ENCODE measurements at regions of chr3 and their contacts with region 1.

Region 1: DNA sequence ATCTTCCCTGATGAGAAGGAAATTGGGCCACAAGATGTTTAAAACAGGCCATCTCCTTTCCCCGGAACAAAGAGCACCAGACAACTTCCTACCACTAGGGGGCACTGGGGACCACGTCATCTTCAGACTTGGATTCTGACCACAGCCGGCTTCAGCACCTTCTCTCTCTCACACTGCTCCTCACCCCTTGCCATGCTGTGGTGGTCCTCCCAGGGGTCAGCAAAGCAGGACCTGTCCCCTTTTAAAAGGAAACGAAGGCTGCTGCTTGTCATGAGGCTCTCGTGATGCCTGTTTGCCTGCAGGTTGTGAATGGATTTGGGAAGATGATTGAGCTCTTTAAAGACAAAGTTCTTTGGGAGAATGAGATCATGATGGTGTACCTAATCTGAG is 16.2 kb downstream of the RFT1 start:
- DNase-seq: peak; percentile 89
- H3K4me3 Mint-ChIP-seq: no peak overlapping the region
- H3K27ac Mint-ChIP-seq: no peak overlapping the region
- H3K4me1 Mint-ChIP-seq: peaks cover 25% of the 10 kb centered on the region
- H3K27me3 Mint-ChIP-seq: no peaks in the 10 kb centered on the region

Region 2: GRCh38 chr3:53065841-53066480 is 48.0 kb before region 1 on chr3:
- CTCF ChIA-PET with region 1: no interaction called
- POLR2A ChIA-PET with region 1: no interaction called
- DNase-seq: no peak
- H3K4me3 Mint-ChIP-seq: no peak overlapping the region
- H3K27ac Mint-ChIP-seq: no peak overlapping the region
- H3K4me1 Mint-ChIP-seq: no peaks in the 10 kb centered on the region
- H3K27me3 Mint-ChIP-seq: peaks cover 23% of the 10 kb centered on the region

Region 3: GRCh38 chr3:53129344-53129743 is 15.3 kb after region 1 on chr3:
- CTCF ChIA-PET with region 1: interaction called, 25 read pairs
- POLR2A ChIA-PET with region 1: no interaction called
- DNase-seq: no peak
- H3K4me3 Mint-ChIP-seq: peak overlapping the region; percentile 85
- H3K27ac Mint-ChIP-seq: peak overlapping the region; percentile 95
- H3K4me1 Mint-ChIP-seq: peaks cover 29% of the 10 kb centered on the region
- H3K27me3 Mint-ChIP-seq: no peaks in the 10 kb centered on the region

Region 4: DNA sequence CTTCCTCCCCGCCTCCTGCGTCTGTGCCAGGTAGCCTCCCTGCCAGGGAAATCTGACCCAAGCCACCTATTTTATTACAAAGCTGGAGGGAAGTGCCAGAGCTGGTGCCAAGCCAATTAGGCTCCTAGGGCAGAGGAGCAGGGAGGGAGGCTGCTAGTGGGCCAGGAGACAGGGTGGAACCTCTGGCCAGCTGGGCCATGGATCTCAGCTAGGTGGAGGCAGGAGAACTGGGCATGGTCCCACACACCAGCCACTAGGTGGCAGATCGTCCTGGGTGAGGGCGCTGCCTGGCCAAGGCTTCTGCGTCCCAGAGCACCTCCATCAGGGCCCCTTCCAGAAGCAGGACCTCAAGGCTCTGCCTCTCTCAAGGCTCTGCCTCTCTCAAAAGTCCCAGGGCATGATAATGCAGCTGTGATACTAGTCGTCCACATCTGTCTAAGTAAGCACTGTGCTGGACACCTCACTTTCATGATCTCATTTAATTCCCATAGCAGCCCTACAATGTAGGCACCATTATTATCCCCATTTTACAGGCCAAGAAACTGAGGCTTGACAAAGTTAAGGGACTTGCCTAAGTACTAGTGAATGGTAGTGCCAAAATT is 20.7 kb after region 1 on chr3:
- CTCF ChIA-PET with region 1: interaction called, 25 read pairs
- POLR2A ChIA-PET with region 1: no interaction called
- DNase-seq: peak; percentile 74
- H3K4me3 Mint-ChIP-seq: no peak overlapping the region
- H3K27ac Mint-ChIP-seq: no peak overlapping the region
- H3K4me1 Mint-ChIP-seq: peaks cover 17% of the 10 kb centered on the region
- H3K27me3 Mint-ChIP-seq: no peaks in the 10 kb centered on the region

Region 5: DNA sequence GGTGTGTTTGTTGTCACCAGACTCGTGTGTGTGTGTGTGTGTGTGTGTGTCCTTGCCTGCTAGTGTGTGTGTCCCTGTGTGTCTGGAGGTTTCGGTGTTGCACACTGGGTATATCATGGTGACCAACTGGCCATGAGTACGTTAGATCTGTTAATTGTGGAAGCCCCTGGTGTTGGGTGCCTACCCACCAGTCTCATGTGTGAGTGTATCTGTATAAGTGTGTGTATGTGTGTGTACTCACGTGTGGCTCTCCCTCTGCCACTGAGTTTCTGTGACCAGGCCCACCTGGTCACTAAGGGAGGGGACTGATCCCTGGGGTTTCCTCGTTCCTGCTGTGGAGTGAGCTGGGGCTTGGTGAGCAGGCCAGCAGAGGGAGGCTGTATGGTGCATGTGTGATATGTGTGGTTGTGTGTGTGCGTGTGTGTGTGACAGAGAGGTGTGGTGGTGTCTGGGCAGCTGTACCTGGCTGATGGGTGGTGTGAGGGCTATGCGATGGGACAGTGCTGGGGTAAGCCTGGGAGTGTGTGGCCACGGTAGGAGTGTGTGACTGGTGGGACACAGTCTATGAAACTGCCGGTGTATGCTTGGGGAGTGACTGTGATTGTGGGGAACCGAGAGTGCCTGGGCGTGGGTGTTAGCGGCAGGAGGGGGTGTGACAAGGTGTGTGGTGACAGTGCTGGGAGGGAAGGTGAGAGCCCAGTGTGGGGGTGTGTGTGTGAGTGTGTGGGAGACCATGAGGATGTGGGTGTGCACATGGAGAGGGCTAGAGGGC is 48.9 kb after region 1 on chr3:
- CTCF ChIA-PET with region 1: interaction called, 10 read pairs
- POLR2A ChIA-PET with region 1: no interaction called
- DNase-seq: peak; percentile 48
- H3K4me3 Mint-ChIP-seq: peak overlapping the region; percentile 72
- H3K27ac Mint-ChIP-seq: peak overlapping the region; percentile 61
- H3K4me1 Mint-ChIP-seq: peaks cover 28% of the 10 kb centered on the region
- H3K27me3 Mint-ChIP-seq: peaks cover 17% of the 10 kb centered on the region

Region 6: GRCh38 chr3:53180305-53181023 is 66.5 kb after region 1 on chr3:
- CTCF ChIA-PET with region 1: no interaction called
- POLR2A ChIA-PET with region 1: no interaction called
- DNase-seq: no peak
- H3K4me3 Mint-ChIP-seq: no peak overlapping the region
- H3K27ac Mint-ChIP-seq: no peak overlapping the region
- H3K4me1 Mint-ChIP-seq: no peaks in the 10 kb centered on the region
- H3K27me3 Mint-ChIP-seq: no peaks in the 10 kb centered on the region

Region 7: GRCh38 chr3:53231572-53232511 is 117.8 kb after region 1 on chr3:
- CTCF ChIA-PET with region 1: no interaction called
- POLR2A ChIA-PET with region 1: no interaction called
- DNase-seq: no peak
- H3K4me3 Mint-ChIP-seq: no peak overlapping the region
- H3K27ac Mint-ChIP-seq: no peak overlapping the region
- H3K4me1 Mint-ChIP-seq: peaks cover 25% of the 10 kb centered on the region
- H3K27me3 Mint-ChIP-seq: no peaks in the 10 kb centered on the region

Measured in activated CD4-positive, alpha-beta T cell treated with anti-CD3 and anti-CD28 coated beads, Interleukin-2, amount 10 ng/mL, durations not matched to agents 7 days and 5 days (primary cell).